ENCODE measurements at regions of chr1 and their contacts with region 1.

Region 1: GRCh38 chr1:17059739-17060460 is 6.1 kb upstream of the SDHB start:
- DNase-seq: peak; percentile 33
- ATAC-seq: peak; percentile 97
- H3K4me3 Mint-ChIP-seq: peak overlapping the region; percentile 15
- H3K27ac Mint-ChIP-seq: no peak overlapping the region
- H3K4me1 Mint-ChIP-seq: peaks cover 12% of the 10 kb centered on the region
- H3K27me3 Mint-ChIP-seq: peaks cover 7% of the 10 kb centered on the region
- CTCF ChIP-seq: no peak

Region 2: GRCh38 chr1:17045634-17046333 is 14.1 kb before region 1 on chr1:
- CTCF ChIA-PET with region 1: no interaction called
- POLR2A ChIA-PET with region 1: no interaction called
- intact Hi-C with region 1: no loop called
- DNase-seq: no peak
- ATAC-seq: peak; percentile 71
- H3K4me3 Mint-ChIP-seq: peak overlapping the region; percentile 78
- H3K27ac Mint-ChIP-seq: peak overlapping the region; percentile 77
- H3K4me1 Mint-ChIP-seq: peaks cover 18% of the 10 kb centered on the region
- H3K27me3 Mint-ChIP-seq: no peaks in the 10 kb centered on the region
- CTCF ChIP-seq: no peak

Region 3: GRCh38 chr1:17119076-17119772 is 59.3 kb after region 1 on chr1 and contains the start of gene PADI2:
- CTCF ChIA-PET with region 1: interaction called, 3 read pairs
- POLR2A ChIA-PET with region 1: interaction called, 3 read pairs
- intact Hi-C with region 1: loop called (anchors 1 kb)
- DNase-seq: peak; percentile 69
- ATAC-seq: peak; percentile 87
- H3K4me3 Mint-ChIP-seq: peak within 1 kb of the TSS; percentile 79
- H3K27ac Mint-ChIP-seq: peak within 1 kb of the TSS; percentile 35
- H3K4me1 Mint-ChIP-seq: peaks cover 34% of the 10 kb centered on the region
- H3K27me3 Mint-ChIP-seq: peaks cover 13% of the 10 kb centered on the region
- CTCF ChIP-seq: no peak
- total RNA-seq, gene PADI2: 7.2 and 9.9 TPM in 2 replicates

Region 4: GRCh38 chr1:17125756-17126237 is 65.9 kb after region 1 on chr1:
- CTCF ChIA-PET with region 1: interaction called, 10 read pairs
- POLR2A ChIA-PET with region 1: interaction called, 3 read pairs
- intact Hi-C with region 1: loop called (anchors 1 kb)
- DNase-seq: peak; percentile 84
- ATAC-seq: peak; percentile 79
- H3K4me3 Mint-ChIP-seq: no peak overlapping the region
- H3K27ac Mint-ChIP-seq: peak overlapping the region; percentile 18
- H3K4me1 Mint-ChIP-seq: peaks cover 38% of the 10 kb centered on the region
- H3K27me3 Mint-ChIP-seq: no peaks in the 10 kb centered on the region
- CTCF ChIP-seq: peak; percentile 81

Region 5: DNA sequence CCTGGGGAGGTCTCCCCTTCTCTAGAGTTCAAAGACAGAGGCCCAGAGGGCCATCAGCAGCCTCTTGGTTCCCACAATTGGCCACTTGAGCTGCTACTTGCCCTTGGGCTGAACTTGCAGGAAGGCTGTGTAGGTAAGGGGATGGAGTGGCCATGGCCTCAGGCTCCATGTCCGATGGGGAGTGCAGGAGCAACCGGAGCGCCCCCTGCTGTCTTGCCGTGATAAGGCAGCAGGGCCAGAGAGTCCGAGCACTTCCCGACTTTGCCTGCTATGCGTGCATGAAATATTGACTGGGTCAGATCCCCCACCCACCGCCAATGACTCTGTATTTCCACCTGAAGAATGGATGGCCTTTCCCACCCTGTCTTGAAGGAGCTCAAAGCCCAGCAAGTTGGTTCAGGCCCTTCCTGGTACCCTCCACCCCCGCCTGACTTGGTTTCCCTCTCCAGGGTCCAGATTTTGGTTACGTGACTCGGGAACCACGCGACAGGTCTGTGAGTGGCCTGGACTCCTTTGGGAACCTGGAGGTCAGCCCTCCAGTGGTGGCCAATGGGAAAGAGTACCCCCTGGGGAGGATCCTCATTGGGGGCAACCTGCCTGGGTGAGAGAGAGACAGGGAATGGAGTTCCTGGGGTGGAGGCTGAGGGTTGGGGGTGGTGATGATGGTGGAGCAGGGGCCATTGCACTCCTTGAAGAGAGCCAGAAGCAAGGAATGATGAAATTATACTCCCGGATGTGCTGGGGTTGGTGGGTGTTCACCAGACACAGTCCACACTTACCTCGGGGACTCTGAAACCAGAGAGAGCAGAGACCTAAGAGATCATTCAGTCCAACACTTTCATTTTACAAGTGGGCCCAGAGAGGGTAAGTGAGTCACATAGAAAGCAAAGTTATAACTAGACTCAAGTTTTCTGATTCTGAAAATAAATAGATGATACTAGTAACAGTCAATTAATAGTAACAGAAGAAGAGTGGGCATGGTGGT is 214.6 kb after region 1 on chr1:
- CTCF ChIA-PET with region 1: no interaction called
- POLR2A ChIA-PET with region 1: no interaction called
- intact Hi-C with region 1: loop called (anchors 1 kb)
- DNase-seq: no peak
- ATAC-seq: no peak
- H3K4me3 Mint-ChIP-seq: no peak overlapping the region
- H3K27ac Mint-ChIP-seq: no peak overlapping the region
- H3K4me1 Mint-ChIP-seq: no peaks in the 10 kb centered on the region
- H3K27me3 Mint-ChIP-seq: peaks cover 11% of the 10 kb centered on the region
- CTCF ChIP-seq: no peak

Region 6: DNA sequence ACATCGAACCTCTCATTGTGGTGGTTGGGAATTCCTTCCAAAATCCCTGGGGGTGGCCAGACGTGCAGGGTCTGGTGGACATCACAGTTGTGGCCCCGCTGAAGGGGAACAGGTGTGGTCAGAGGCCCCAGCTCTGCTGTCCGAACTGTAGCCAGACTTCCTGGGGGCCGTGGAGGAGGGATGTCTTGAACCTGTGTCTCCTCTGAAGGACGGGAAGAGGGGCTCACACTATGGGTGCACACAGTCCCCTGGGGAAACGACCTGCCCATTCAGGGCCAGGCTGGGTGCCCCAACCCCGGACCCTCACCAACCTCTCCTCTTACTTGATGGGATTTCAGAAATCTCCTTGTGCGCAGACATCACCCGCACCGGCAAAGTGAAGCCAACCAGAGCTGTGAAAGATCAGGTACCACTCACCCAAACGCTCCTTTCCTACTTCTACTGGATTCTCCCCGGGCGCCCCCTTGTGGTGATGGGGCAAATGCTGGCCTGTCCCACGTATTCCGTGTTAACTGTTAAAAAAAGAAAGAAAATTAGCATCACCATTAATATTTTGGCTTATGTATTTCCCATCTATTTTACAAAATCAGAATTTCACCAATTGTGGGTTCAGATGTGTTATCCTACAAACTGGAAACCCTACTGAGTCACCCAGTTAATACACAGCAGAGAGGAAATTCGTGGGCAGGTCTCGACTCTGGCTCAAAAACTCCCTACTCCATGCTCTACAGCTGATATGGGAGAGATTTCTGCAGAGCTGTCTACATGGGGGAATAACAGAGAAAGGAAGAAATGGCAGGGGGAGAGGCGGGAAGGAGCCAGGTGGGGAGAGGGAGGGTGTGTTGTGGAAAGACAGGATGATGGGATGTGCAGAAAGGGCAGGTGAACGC is 276.2 kb after region 1 on chr1:
- CTCF ChIA-PET with region 1: interaction called, 25 read pairs
- POLR2A ChIA-PET with region 1: interaction called, 4 read pairs
- intact Hi-C with region 1: no loop called
- DNase-seq: peak; percentile 61
- ATAC-seq: no peak
- H3K4me3 Mint-ChIP-seq: no peak overlapping the region
- H3K27ac Mint-ChIP-seq: no peak overlapping the region
- H3K4me1 Mint-ChIP-seq: no peaks in the 10 kb centered on the region
- H3K27me3 Mint-ChIP-seq: peaks cover 19% of the 10 kb centered on the region
- CTCF ChIP-seq: peak; percentile 82